Activated naive CD4-positive, alpha-beta T cell treated with anti-CD3 and anti-CD28 coated beads for 36 hours (primary cell): ENCODE measurements at regions of chr1 and their contacts with region 1.

Region 1: DNA sequence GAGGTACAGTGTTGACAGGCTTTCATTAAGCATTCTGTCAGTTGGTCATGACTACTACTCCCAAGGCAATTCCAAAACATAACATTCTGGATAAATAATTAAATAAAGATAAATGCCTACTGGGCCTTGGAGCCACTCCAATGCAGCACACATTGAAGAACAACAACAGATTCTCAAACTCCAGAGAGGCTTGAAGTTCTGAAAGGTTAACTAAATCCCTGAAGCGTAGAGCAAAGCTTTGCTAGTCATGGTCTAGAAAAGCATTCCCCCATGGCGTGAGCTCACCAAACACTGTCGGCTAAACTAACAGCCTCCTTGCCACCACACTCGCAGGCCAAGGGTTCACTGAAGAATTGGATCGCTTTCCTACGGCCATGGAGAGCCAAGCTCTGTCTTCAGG is 268.0 kb downstream of the ATG4C start:
- DNase-seq: no peak
- H3K4me3 Mint-ChIP-seq: no peak overlapping the region
- H3K27ac Mint-ChIP-seq: no peak overlapping the region
- H3K4me1 Mint-ChIP-seq: no peaks in the 10 kb centered on the region
- H3K27me3 Mint-ChIP-seq: peaks cover 13% of the 10 kb centered on the region

Region 2: GRCh38 chr1:63411066-63411465 is 359.2 kb after region 1 on chr1:
- CTCF ChIA-PET with region 1: no interaction called
- intact Hi-C with region 1: loop called (anchors 10 kb)
- DNase-seq: no peak
- H3K4me3 Mint-ChIP-seq: no peak overlapping the region
- H3K27ac Mint-ChIP-seq: no peak overlapping the region
- H3K4me1 Mint-ChIP-seq: no peaks in the 10 kb centered on the region
- H3K27me3 Mint-ChIP-seq: no peaks in the 10 kb centered on the region

Region 3: DNA sequence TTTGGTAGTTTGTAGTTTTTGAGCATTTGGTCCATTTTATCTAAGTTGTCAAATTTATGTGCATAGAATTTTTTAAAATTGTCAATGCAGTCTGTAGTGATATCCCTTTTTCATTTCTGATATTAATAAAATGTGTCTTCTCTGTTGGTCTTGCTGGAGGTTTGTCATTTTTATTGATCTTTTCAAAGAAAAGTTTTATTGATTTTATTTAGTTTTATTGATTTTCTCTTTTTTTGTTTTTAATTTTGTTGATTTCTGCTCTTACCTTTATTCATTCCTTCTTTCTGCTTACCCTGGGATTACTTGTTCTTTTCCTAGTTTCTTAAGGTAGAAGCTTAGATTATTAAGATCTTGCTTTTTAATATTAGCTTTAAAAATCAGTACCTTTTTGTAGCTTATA is 533.3 kb after region 1 on chr1:
- CTCF ChIA-PET with region 1: no interaction called
- intact Hi-C with region 1: no loop called
- DNase-seq: no peak
- H3K4me3 Mint-ChIP-seq: no peak overlapping the region
- H3K27ac Mint-ChIP-seq: no peak overlapping the region
- H3K4me1 Mint-ChIP-seq: peaks cover 9% of the 10 kb centered on the region
- H3K27me3 Mint-ChIP-seq: no peaks in the 10 kb centered on the region